Ascending aorta (tissue), 2 donors: ENCODE measurements at regions of chr7 and their contacts with region 1.

Region 1: GRCh38 chr7:66844552-66845378 is 76.3 kb upstream of the TMEM248 start:
- DNase-seq: peak; percentile 89 to 99
- H3K4me3 ChIP-seq: peak overlapping the region; percentile 69 to 78
- H3K27ac ChIP-seq: peak overlapping the region; percentile 94 to 96
- H3K4me1 ChIP-seq: peaks cover 0 to 9% of the 10 kb centered on the region in 2 donors
- H3K27me3 ChIP-seq: no peaks in the 10 kb centered on the region
- CTCF ChIP-seq: peak; percentile 16 to 51 (median 29)

Region 2: DNA sequence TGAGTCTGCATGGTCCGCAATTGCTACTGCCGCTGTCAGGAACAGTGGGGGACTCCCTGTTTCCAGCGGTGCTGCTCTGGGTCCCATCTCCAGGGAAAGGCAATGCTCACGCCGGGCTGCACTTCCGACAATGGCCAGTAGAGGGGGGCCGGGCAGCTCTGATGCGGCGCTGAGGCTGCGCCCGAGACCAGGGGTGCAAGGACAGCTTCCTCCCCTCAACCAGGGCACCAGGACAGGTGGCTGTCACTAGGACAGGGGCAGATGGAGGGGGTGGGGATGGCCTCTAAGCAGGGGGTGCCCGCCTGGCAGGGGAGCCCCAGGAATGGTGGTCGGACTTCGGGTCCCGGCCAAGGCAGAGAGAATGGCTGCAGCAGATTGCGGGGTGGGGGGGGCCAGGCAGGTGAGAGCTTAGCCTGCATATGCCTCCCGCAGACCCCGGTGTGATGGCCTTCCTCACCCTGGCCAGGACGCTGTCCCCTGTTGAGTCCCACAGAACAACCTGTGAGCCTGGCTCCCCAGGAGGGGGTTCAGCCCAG is 287.1 kb before region 1 on chr7:
- intact Hi-C with region 1: loop called (anchors 5 kb)
- DNase-seq: peak in 1 of 2 donors; percentile 80
- H3K4me3 ChIP-seq: peak overlapping the region in 1 of 2 donors; percentile 33
- H3K27ac ChIP-seq: no peak overlapping the region
- H3K4me1 ChIP-seq: no peaks in the 10 kb centered on the region
- H3K27me3 ChIP-seq: no peaks in the 10 kb centered on the region
- CTCF ChIP-seq: peak; percentile 87 to 98 (median 96)

Region 3: GRCh38 chr7:66654123-66654732 is 190.5 kb before region 1 on chr7:
- intact Hi-C with region 1: loop called (anchors 10 kb)
- DNase-seq: peak; percentile 92 to 99
- H3K4me3 ChIP-seq: peak overlapping the region; percentile 87 to 97
- H3K27ac ChIP-seq: peak overlapping the region; percentile 98 to 99
- H3K4me1 ChIP-seq: peaks cover 0 to 13% of the 10 kb centered on the region in 2 donors
- H3K27me3 ChIP-seq: no peaks in the 10 kb centered on the region
- CTCF ChIP-seq: peak in 2 of 3 experiments; percentile 14 to 30

Region 4: GRCh38 chr7:66877577-66878300 is 33.0 kb after region 1 on chr7:
- intact Hi-C with region 1: no loop called
- DNase-seq: no peak
- H3K4me3 ChIP-seq: no peak overlapping the region
- H3K27ac ChIP-seq: no peak overlapping the region
- H3K4me1 ChIP-seq: no peaks in the 10 kb centered on the region
- H3K27me3 ChIP-seq: no peaks in the 10 kb centered on the region
- CTCF ChIP-seq: no peak

Region 5: DNA sequence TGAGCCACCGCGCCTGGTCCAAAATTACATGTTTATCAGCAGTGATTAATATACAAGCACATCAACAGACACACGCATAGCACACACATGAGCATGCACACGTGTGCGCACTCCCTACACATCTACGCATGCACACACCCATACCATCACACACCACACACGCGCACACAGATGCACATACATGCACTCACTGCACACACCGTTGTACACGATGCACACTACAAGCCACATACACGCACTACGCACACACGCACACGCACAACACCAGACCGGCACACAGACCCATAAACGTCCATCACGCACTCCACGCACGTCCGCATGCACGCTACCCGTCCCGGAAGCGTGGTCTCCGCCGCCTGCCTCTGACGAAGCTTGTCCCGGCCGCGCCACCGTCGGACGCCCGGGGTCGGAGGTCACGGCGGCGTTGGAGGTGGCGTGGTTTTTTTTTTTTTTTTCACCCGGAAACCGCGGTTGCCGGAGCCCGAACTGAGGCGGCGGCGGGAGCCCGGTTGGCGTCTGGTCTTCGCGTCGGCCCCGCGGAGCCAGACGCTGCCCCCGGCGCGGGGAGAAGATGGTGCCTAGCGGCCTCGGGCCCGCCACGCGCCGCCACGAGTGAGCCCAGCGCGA is 76.1 kb after region 1 on chr7 and contains the start of gene TMEM248:
- intact Hi-C with region 1: loop called (anchors 2 kb)
- DNase-seq: peak; percentile 38 to 94
- H3K4me3 ChIP-seq: peak within 1 kb of the TSS; percentile 86 to 97
- H3K27ac ChIP-seq: peak within 1 kb of the TSS; percentile 74 to 86
- H3K4me1 ChIP-seq: peaks cover 6 to 25% of the 10 kb centered on the region in 2 donors
- H3K27me3 ChIP-seq: no peaks in the 10 kb centered on the region
- CTCF ChIP-seq: no peak
- total RNA-seq, gene TMEM248: 278 TPM

Region 6: DNA sequence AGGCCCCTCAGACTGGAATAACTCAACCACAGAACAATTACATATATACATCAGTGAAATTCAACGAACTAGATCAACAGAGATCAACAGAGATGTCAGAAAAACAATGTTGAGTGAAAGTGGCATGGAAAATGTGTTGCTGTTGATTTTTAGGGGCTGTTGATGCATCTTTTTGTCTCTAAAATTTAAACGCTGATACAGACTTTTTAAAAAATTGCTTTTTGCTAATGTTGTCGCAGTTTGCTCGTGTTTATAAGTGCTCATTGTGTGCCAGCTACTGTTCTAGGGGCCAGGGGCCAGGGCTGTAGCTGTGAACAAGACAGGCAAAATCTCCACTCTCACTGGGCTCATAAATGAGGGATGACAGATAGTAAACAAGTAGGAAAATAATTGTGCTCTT is 94.6 kb after region 1 on chr7:
- intact Hi-C with region 1: no loop called
- DNase-seq: no peak
- H3K4me3 ChIP-seq: no peak overlapping the region
- H3K27ac ChIP-seq: no peak overlapping the region
- H3K4me1 ChIP-seq: peaks cover 0 to 4% of the 10 kb centered on the region in 2 donors
- H3K27me3 ChIP-seq: no peaks in the 10 kb centered on the region
- CTCF ChIP-seq: no peak